ENCODE measurements at regions of chr4 and their contacts with region 1.

Region 1: GRCh38 chr4:173318648-173319211 is 15.4 kb downstream of the HMGB2 start:
- DNase-seq: no peak
- H3K4me3 ChIP-seq: no peak overlapping the region
- H3K27ac ChIP-seq: no peak overlapping the region
- H3K4me1 ChIP-seq: no peaks in the 10 kb centered on the region
- H3K27me3 ChIP-seq: no peaks in the 10 kb centered on the region
- CTCF ChIP-seq: peak; percentile 30 to 48 (median 30)
- POLR2A ChIP-seq: no peak

Region 2: DNA sequence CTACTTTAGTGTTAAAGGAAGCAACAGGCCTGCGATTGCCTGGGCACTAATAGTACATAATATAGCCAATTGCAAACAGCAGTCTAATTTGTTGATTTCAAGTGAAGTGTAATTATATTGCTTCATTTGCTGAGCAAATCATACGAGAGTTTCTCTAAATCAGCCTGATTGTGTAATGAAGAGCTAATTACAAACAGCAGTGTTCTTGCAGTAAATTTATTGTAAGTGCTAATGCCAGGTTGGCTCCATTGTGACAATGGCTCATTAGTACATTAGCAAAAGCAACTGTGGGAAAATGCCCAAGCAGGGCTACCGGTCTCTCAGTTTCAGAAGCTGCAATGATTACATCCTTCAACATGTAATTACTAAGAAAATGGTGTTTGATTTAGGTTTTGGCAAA is 914.1 kb before region 1 on chr4:
- intact Hi-C with region 1: no loop called
- DNase-seq: no peak
- H3K4me3 ChIP-seq: no peak overlapping the region
- H3K27ac ChIP-seq: no peak overlapping the region
- H3K4me1 ChIP-seq: no peaks in the 10 kb centered on the region
- H3K27me3 ChIP-seq: no peaks in the 10 kb centered on the region
- CTCF ChIP-seq: no peak
- POLR2A ChIP-seq: no peak

Region 3: DNA sequence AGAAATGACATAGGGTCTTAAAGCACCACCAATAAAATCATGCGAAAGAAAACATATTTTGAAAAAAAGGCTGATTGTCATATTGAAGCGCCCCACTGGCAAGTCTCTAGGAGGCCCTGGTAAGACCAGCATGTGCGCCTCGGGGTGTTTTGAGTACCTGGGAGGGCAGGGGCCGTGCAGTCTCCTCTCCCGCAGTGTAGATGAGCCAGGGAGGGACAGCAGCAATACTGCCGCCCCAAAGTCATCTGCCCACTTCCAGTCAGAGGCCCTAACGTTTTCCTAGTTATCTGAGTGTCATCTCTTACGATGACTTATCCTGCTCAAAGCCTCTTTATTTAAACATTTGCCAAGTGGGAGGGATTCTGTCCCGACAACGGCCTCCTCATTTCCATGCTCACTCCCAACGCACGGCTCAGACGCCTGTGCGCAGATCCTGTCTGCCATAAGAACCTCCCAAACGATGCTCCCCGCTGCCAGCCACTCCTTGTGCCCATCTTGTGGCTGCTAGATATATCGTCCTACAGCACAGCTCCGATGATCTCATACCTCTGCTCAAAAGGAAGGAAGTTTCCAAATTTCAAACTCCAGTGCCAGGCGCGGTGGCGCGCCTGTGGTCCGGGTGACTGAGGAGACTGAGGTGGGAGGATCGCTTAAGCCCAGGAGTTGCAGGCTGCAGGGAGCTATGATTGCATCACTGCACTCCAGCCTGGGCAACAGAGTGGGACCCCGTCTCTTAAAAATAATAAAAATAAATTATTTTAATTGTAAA is 97.3 kb after region 1 on chr4:
- intact Hi-C with region 1: loop called (anchors 5 kb)
- DNase-seq: no peak
- H3K4me3 ChIP-seq: no peak overlapping the region
- H3K27ac ChIP-seq: peak overlapping the region; percentile 31
- H3K4me1 ChIP-seq: peaks cover 4% of the 10 kb centered on the region
- H3K27me3 ChIP-seq: no peaks in the 10 kb centered on the region
- CTCF ChIP-seq: no peak
- POLR2A ChIP-seq: no peak